Common myeloid progenitor, CD34-positive (primary cell): ENCODE measurements at regions of chr2 and their contacts with region 1.

Region 1: DNA sequence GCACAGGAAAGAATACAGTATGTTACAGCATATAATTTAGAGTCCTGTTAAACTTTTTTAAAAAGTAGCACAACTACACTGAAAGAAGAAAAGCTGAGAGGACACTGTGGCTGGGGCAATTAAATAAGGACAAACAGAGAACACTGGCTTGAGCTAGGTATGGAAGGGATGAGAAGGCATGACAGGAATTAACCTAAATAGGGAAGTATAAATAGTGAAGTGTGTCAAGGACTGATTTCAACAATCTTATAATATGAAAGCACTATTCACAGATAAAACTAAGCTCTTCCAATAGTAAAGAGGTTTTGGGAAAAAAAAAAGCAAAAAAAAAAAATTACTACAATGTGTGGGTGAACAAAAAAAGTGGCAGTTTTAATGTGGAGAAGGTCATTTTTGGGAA is 45.5 kb downstream of the PPP3R1 start:
- DNase-seq: peak in 1 of 3 donors; percentile 40
- H3K4me3 ChIP-seq: no peak overlapping the region
- H3K27ac ChIP-seq: no peak overlapping the region
- H3K4me1 ChIP-seq: peaks cover 2 to 10% (median 5%) of the 10 kb centered on the region in 4 experiments
- H3K27me3 ChIP-seq: no peaks in the 10 kb centered on the region

Region 2: DNA sequence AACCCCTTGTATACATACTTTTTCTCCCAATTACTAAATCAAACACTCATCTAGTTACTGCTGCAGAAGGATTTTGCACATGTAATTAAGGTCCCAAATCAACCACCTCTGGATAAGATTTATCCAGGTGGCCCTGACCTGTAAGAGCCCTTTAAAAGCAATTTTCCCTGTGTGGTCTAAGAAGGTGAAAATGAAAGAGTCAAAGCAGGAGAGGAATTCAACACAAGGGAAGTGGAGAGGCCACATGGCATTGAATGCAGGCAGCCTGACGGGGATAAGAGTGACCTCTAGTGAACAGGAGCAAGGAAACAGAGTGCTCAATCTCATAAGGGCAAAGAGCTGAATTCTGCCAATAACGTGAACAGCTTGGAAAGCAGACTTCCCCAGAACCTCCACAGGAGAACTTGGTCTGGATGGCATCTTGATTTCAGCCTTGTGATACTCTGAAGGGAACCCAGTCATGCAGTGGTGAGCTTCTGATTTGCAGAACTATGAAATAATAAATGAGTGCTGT is 18.4 kb after region 1 on chr2:
- CTCF ChIA-PET with region 1: interaction called, 17 read pairs
- POLR2A ChIA-PET with region 1: no interaction called
- DNase-seq: peak; percentile 42 to 52 (median 48)
- H3K4me3 ChIP-seq: peak overlapping the region in 2 of 7 experiments; percentile 5 to 26
- H3K27ac ChIP-seq: peak overlapping the region in 1 of 2 experiments; percentile 32
- H3K4me1 ChIP-seq: peaks cover 3 to 15% (median 8%) of the 10 kb centered on the region in 4 experiments
- H3K27me3 ChIP-seq: no peaks in the 10 kb centered on the region